Left ventricle myocardium superior (tissue), 1 donor: ENCODE measurements at regions of chr12 and their contacts with region 1.

Region 1: DNA sequence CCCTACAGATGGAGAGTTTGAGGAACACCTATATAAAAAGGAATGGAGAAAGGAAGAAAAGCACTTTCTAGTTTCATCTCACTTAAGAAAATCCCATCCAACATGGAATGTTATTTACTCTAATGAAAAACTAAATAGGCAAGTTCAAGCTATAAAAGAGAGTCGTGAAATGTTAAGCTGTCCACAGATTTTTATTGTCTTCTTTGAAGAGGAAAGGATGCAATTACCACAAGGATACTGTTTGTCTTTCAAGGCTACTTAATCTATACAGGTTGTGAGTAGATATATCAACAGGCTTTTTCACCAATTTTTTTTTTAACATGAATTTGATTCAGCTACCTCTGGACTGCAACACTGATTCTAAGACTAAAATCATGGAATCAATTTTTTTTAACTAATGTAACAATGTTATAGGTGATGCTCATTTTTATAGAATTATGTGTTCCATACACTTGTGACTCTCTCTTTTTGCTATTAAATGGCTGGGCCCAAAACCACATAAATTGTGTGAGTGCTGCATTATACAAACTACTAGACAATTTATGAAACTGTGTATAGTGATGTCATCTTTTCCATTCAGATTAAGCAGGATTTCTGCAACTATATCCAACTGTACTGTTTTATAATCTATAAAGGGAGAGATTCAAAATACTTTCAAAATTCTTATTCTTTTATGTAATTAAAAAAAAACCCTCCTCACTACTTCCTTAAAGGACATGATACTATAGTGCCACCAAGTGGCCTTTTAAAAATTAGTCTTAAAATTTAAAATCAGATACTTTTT is 26.8 kb upstream of the BMAL2 start:
- DNase-seq: no peak
- ATAC-seq: peak; percentile 39

Region 2: GRCh38 chr12:27014085-27014858 is 291.6 kb before region 1 on chr12 and contains the start of gene TM7SF3:
- intact Hi-C with region 1: loop called (anchors 5 kb)
- DNase-seq: peak; percentile 96
- ATAC-seq: peak; percentile 96
- total RNA-seq, gene TM7SF3: 27.3 TPM

Region 3: DNA sequence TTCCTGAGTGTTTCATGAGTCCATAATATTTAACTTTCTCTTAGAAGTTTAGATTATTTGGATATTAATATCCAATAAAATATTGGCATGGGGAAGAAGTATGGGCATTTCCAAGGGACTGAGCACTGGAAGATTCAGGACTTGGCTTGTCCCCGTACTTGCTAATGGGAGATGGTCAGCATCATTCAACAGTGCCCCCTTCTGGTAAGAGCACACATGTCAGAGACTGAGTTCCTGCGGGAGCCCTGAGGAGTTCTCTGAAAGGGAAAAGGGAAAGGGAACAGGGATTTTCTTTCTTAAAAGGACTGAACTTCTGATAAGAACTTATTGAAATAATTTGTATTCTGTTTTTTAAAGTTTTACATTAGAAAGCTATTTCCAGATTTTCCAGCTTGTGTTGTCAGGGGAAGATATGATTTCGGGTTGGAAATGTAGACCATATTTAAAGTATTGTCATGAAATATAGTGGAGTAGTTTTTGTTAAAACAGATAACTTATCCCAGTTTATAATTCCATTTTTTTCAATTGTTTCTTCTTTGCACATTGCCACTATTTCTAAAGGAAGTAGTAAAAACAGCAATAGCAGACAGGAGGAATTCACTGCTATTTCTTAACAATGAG is 163.7 kb before region 1 on chr12:
- intact Hi-C with region 1: loop called (anchors 10 kb)
- DNase-seq: no peak
- ATAC-seq: peak; percentile 91

Region 4: DNA sequence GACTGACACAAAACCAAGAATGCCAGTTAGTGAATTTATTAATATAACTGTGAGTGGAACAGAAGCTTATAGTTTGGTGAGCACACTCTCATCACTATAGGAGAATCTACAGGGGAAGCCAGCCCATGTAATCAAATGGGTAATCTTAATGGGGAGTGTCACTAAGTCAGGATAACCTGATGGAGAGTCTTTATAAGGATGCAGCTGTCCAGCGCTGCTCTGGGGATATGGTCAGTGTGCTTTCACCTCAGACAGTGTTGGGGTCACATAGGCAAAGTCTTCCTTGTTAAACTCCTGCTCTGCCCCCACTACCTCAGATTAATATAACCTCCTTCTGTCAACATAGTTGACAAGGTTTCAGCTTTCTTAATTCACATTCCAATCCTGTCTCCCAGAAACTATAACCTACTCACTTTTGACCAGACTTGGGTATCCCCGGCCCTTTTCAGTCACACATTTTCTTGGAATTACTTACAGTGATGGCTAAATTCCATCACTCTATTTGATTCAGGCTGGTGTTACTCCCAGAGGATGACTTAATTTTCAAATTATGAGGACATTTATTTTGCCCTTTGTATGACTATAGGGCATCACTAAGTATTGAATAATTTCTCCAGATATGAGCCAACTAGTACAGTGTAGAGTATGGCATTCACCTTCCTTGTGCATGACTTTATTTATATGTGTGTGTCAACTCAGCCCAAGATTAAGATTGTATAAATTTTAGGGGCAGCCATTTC is 48.6 kb before region 1 on chr12:
- intact Hi-C with region 1: loop called (anchors 5 kb)
- DNase-seq: no peak
- ATAC-seq: no peak

Region 5: DNA sequence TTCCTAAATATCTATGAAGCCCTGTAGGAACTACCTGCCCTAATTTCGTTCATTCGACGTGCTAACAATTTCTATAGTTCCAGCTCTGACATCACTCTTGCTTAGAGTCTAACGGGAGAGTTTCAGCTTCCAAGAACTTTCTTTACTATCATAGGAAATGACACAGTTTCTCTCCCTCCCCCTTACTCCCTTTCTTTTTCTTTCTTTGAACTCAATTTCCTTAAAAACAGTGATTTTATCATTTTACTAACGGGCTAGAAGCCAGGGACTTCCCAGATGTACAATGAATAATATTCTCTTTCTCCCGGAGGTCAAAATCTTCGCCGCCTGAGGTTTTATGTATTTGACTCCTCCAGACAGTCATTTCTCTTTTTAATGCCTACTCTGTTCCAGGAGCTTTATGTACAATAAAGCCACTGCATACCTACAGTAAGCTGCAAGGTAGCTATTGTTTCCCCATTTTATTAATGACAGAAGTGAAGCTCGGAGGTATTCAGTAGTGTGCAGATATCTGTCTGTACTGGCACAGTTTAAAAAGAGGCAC is 156.4 kb after region 1 on chr12:
- intact Hi-C with region 1: no loop called
- DNase-seq: no peak
- ATAC-seq: peak; percentile 13